CD8-positive, alpha-beta T cell (primary cell): ENCODE measurements at regions of chr2 and their contacts with region 1.

Region 1: GRCh38 chr2:27370026-27370815 is at the starts of genes EIF2B4 and SNX17:
- DNase-seq: peak; percentile 98 to 100 (median 99)
- ATAC-seq: peak; percentile 91
- H3K4me3 ChIP-seq: peak within 1 kb of the TSS; percentile 88 to 94
- H3K4me3 Mint-ChIP-seq: peak within 1 kb of the TSS; percentile 96
- H3K27ac ChIP-seq: peak within 1 kb of the TSS; percentile 76 to 88
- H3K27ac Mint-ChIP-seq: peak within 1 kb of the TSS; percentile 97
- H3K4me1 ChIP-seq: peaks cover 35% of the 10 kb centered on the region
- H3K4me1 Mint-ChIP-seq: peaks cover 36% of the 10 kb centered on the region
- H3K27me3 ChIP-seq: no peaks in the 10 kb centered on the region
- H3K27me3 Mint-ChIP-seq: no peaks in the 10 kb centered on the region
- CTCF ChIP-seq: peak; percentile 64
- total RNA-seq, gene EIF2B4: 39.7 to 39.9 TPM
- total RNA-seq, gene SNX17: 64.8 to 66.5 TPM

Region 2: DNA sequence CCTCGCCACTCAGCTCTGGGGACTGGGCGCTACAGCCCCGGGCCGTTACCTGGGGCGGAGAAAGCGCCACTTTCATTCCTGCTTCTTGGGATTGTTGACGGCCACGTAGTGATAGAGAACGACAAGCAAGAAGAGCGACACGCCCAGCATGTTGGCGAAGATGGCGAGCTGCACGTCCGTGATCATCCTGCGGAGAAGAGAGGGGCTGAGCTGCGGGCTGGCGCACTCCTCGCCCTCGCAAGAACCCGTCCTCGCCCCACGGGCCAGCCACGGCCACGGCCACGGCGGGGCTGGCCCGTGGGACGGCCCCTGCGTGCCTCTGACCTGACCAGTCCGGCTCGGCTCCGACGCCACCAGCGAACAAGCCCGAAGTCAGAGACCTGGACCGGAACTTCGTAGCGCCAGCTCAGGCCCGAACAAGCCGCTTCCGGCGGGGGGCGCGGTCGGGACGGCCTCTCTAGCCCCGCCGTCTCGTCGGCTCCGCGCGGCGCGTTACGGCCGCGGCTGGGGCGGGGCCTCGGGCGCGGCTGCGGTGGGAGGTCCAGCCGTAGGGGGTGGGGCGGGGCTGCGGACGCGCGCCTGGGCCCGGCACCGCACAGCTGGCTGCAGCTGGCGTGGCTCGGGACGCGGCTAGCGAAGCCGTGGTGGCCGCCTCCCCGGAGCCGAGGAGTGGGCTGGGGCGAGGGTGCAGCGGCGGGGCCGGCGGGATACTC is 298.8 kb before region 1 on chr2 and contains the start of gene OST4:
- CTCF ChIA-PET with region 1: no interaction called
- POLR2A ChIA-PET with region 1: no interaction called
- intact Hi-C with region 1: loop called in 1 of 2 experiments (anchors 5 kb)
- DNase-seq: peak; percentile 74 to 94 (median 88)
- ATAC-seq: peak; percentile 88
- H3K4me3 ChIP-seq: peak within 1 kb of the TSS; percentile 84 to 93
- H3K4me3 Mint-ChIP-seq: peak within 1 kb of the TSS; percentile 98
- H3K27ac ChIP-seq: peak within 1 kb of the TSS; percentile 92 to 98
- H3K27ac Mint-ChIP-seq: peak within 1 kb of the TSS; percentile 98
- H3K4me1 ChIP-seq: peaks cover 46% of the 10 kb centered on the region
- H3K4me1 Mint-ChIP-seq: peaks cover 76% of the 10 kb centered on the region
- H3K27me3 ChIP-seq: no peaks in the 10 kb centered on the region
- H3K27me3 Mint-ChIP-seq: no peaks in the 10 kb centered on the region
- CTCF ChIP-seq: no peak
- total RNA-seq, gene OST4: 252 to 260 TPM

Region 3: GRCh38 chr2:27102329-27102728 is 267.9 kb before region 1 on chr2:
- CTCF ChIA-PET with region 1: no interaction called
- POLR2A ChIA-PET with region 1: no interaction called
- intact Hi-C with region 1: no loop called
- DNase-seq: no peak
- ATAC-seq: no peak
- H3K4me3 ChIP-seq: no peak overlapping the region
- H3K4me3 Mint-ChIP-seq: no peak overlapping the region
- H3K27ac ChIP-seq: no peak overlapping the region
- H3K27ac Mint-ChIP-seq: no peak overlapping the region
- H3K4me1 ChIP-seq: no peaks in the 10 kb centered on the region
- H3K4me1 Mint-ChIP-seq: no peaks in the 10 kb centered on the region
- H3K27me3 ChIP-seq: peaks cover 0 to 3% of the 10 kb centered on the region in 2 experiments
- H3K27me3 Mint-ChIP-seq: peaks cover 16% of the 10 kb centered on the region
- CTCF ChIP-seq: no peak

Region 4: GRCh38 chr2:27217217-27218121 is 152.8 kb before region 1 on chr2 and contains the start of gene CAD:
- CTCF ChIA-PET with region 1: no interaction called
- POLR2A ChIA-PET with region 1: no interaction called
- intact Hi-C with region 1: loop called (anchors 1 to 5 kb)
- DNase-seq: peak; percentile 69 to 92 (median 85)
- ATAC-seq: peak; percentile 77
- H3K4me3 ChIP-seq: peak within 1 kb of the TSS; percentile 84
- H3K4me3 Mint-ChIP-seq: peak within 1 kb of the TSS; percentile 96
- H3K27ac ChIP-seq: peak within 1 kb of the TSS; percentile 66 to 78
- H3K27ac Mint-ChIP-seq: peak within 1 kb of the TSS; percentile 94
- H3K4me1 ChIP-seq: peaks cover 25% of the 10 kb centered on the region
- H3K4me1 Mint-ChIP-seq: peaks cover 45% of the 10 kb centered on the region
- H3K27me3 ChIP-seq: no peaks in the 10 kb centered on the region
- H3K27me3 Mint-ChIP-seq: no peaks in the 10 kb centered on the region
- CTCF ChIP-seq: no peak
- total RNA-seq, gene CAD: 24.7 to 31.4 TPM

Region 5: DNA sequence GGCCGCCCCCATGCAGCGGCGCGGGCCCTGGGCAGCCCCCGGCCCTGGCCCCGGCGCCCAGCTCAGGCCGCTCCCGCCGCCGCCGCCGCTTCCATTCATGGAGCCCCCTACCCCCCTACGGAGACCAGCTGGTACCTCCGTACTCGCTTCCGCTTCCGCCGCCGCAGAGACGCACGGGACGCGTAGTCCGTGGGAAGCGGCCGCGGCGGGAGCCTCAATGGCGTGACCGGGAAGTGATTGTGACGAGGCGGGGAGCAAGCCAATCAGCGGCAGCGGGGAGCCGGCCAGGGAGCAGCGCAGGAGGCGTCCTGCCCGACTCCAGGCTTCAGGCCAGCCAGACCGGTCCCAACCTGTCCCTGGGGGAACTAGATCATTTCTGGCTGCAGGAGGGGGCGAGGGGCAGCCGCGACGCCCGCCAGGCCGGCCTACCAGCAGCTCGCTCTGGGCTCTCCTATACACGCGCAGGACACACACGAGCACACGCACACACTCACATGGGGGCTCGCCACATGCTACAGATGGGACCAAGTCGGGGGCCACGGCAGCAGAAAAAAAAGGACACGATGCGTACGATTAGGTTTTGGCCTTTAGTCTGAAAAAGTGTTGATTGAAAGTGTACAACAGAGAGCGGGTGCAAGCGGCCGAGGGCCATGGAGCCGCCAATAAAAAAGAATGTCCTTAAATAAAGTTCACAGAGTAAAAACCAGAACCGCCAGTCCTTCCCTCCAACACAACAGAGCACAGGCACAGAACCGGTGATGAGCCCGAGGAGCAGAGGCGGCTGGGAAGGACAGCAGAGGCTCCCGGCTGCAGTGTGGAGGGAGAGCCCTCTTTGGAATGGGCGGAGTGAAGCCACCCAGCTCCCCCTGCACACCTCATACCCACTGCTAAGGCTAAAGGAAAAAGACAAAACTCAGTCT is 10.7 kb after region 1 on chr2 and contains the start of gene ZNF513:
- CTCF ChIA-PET with region 1: interaction called, 12 read pairs
- POLR2A ChIA-PET with region 1: interaction called, 50 read pairs
- intact Hi-C with region 1: loop called (anchors 1 kb)
- DNase-seq: peak; percentile 70 to 94 (median 89)
- ATAC-seq: peak; percentile 89
- H3K4me3 ChIP-seq: peak within 1 kb of the TSS; percentile 65 to 72
- H3K4me3 Mint-ChIP-seq: peak within 1 kb of the TSS; percentile 87
- H3K27ac ChIP-seq: peak within 1 kb of the TSS; percentile 66 to 94
- H3K27ac Mint-ChIP-seq: peak within 1 kb of the TSS; percentile 94
- H3K4me1 ChIP-seq: peaks cover 17% of the 10 kb centered on the region
- H3K4me1 Mint-ChIP-seq: peaks cover 22% of the 10 kb centered on the region
- H3K27me3 ChIP-seq: no peaks in the 10 kb centered on the region
- H3K27me3 Mint-ChIP-seq: no peaks in the 10 kb centered on the region
- CTCF ChIP-seq: no peak
- total RNA-seq, gene ZNF513: 19.0 to 21.6 TPM

Region 6: GRCh38 chr2:27489498-27490397 is 119.5 kb after region 1 on chr2 and contains the start of gene IFT172:
- CTCF ChIA-PET with region 1: no interaction called
- POLR2A ChIA-PET with region 1: no interaction called
- intact Hi-C with region 1: loop called (anchors 1 kb)
- DNase-seq: peak; percentile 98 to 100 (median 99)
- ATAC-seq: peak; percentile 91
- H3K4me3 ChIP-seq: peak within 1 kb of the TSS; percentile 53 to 57
- H3K4me3 Mint-ChIP-seq: peak within 1 kb of the TSS; percentile 82
- H3K27ac ChIP-seq: peak within 1 kb of the TSS; percentile 85 to 90
- H3K27ac Mint-ChIP-seq: peak within 1 kb of the TSS; percentile 94
- H3K4me1 ChIP-seq: peaks cover 20% of the 10 kb centered on the region
- H3K4me1 Mint-ChIP-seq: peaks cover 21% of the 10 kb centered on the region
- H3K27me3 ChIP-seq: peaks cover 7 to 10% of the 10 kb centered on the region in 2 experiments
- H3K27me3 Mint-ChIP-seq: peaks cover 13% of the 10 kb centered on the region
- CTCF ChIP-seq: no peak
- total RNA-seq, gene IFT172: 15.0 to 17.2 TPM

Region 7: DNA sequence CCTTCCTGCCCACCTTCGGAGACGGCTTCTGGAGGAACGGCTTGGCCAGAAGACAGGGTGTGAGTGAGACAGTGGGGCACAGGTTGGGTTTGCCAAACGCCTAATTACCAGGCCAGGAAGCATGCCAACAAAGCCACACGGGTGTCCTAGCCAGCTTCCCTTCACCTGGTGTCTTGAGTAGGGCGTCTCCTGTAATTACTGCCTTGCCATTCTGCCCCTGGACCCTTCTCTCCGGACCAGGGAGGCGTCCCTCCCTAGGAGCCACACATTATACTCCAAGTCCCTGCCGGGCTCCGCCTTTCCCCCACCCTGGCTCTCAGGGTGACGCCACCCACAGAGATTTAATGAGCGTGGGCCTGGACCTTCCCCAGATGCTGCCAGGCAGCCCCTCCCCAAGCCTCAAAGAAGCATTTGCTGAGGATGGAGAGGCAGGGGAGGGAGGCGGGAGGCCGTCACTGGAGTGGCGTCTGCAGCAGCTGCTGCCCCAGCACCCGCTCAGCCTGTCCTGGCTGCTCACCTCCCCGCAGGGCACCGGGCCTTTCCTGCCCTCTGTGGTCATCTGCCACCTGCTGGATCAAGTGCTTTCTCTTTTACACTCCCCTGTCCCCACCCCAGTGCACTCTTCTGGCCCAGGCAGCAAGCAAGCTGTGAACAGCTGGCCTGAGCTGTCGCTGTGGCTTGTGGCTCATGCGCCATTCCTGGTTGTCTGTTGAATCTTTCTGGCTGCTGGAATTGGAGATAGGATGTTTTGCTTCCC is 1043.1 kb after region 1 on chr2:
- CTCF ChIA-PET with region 1: no interaction called
- POLR2A ChIA-PET with region 1: no interaction called
- intact Hi-C with region 1: no loop called
- DNase-seq: peak in 2 of 9 experiments; percentile 45 to 66
- ATAC-seq: no peak
- H3K4me3 ChIP-seq: no peak overlapping the region
- H3K4me3 Mint-ChIP-seq: no peak overlapping the region
- H3K27ac ChIP-seq: peak overlapping the region in 1 of 2 experiments; percentile 23
- H3K27ac Mint-ChIP-seq: peak overlapping the region; percentile 41
- H3K4me1 ChIP-seq: peaks cover 34% of the 10 kb centered on the region
- H3K4me1 Mint-ChIP-seq: peaks cover 38% of the 10 kb centered on the region
- H3K27me3 ChIP-seq: no peaks in the 10 kb centered on the region
- H3K27me3 Mint-ChIP-seq: no peaks in the 10 kb centered on the region
- CTCF ChIP-seq: no peak